ENCODE measurements at regions of chr1 and their contacts with region 1.

Region 1: GRCh38 chr1:205977402-205978014 is 25.7 kb downstream of the RAB7B start:
- DNase-seq: peak; percentile 81
- ATAC-seq: peak; percentile 85
- H3K4me3 Mint-ChIP-seq: no peak overlapping the region
- H3K27ac Mint-ChIP-seq: no peak overlapping the region
- H3K4me1 Mint-ChIP-seq: no peaks in the 10 kb centered on the region
- H3K27me3 Mint-ChIP-seq: peaks cover 5% of the 10 kb centered on the region

Region 2: GRCh38 chr1:205591522-205592351 is 385.8 kb before region 1 on chr1:
- CTCF ChIA-PET with region 1: interaction called, 19 read pairs
- POLR2A ChIA-PET with region 1: no interaction called
- DNase-seq: peak; percentile 91
- ATAC-seq: peak; percentile 90
- H3K4me3 Mint-ChIP-seq: peak overlapping the region; percentile 81
- H3K27ac Mint-ChIP-seq: peak overlapping the region; percentile 95
- H3K4me1 Mint-ChIP-seq: peaks cover 42% of the 10 kb centered on the region
- H3K27me3 Mint-ChIP-seq: peaks cover 3% of the 10 kb centered on the region

Region 3: DNA sequence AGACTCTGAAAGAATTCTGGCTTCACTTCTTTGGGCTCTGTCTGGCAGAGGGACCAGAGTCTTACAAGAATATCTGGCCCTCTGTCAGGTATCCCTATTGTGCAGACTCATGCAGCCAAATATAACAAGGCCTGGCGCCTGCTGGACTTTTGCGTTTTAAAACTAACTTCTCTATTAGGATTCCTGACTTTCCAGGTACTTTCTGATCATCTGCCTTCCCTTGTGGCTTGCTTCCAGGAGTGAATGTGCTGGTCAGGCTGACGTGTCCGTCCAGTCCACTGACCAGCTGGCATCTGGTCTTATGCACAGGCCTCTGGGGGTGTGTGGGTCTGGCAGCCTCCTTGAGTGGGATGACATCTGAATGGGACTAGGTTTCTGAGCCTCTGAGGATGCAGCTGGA is 193.6 kb before region 1 on chr1:
- CTCF ChIA-PET with region 1: interaction called, 33 read pairs
- POLR2A ChIA-PET with region 1: no interaction called
- DNase-seq: no peak
- ATAC-seq: no peak
- H3K4me3 Mint-ChIP-seq: no peak overlapping the region
- H3K27ac Mint-ChIP-seq: no peak overlapping the region
- H3K4me1 Mint-ChIP-seq: peaks cover 16% of the 10 kb centered on the region
- H3K27me3 Mint-ChIP-seq: no peaks in the 10 kb centered on the region

Region 4: GRCh38 chr1:205805082-205805712 is 172.3 kb before region 1 on chr1:
- CTCF ChIA-PET with region 1: interaction called, 19 read pairs
- POLR2A ChIA-PET with region 1: interaction called, 3 read pairs
- DNase-seq: peak; percentile 30
- ATAC-seq: peak; percentile 47
- H3K4me3 Mint-ChIP-seq: peak overlapping the region; percentile 23
- H3K27ac Mint-ChIP-seq: peak overlapping the region; percentile 70
- H3K4me1 Mint-ChIP-seq: peaks cover 38% of the 10 kb centered on the region
- H3K27me3 Mint-ChIP-seq: no peaks in the 10 kb centered on the region

Region 5: GRCh38 chr1:205925730-205926129 is 51.8 kb before region 1 on chr1:
- CTCF ChIA-PET with region 1: interaction called, 166 read pairs
- POLR2A ChIA-PET with region 1: no interaction called
- DNase-seq: no peak
- ATAC-seq: no peak
- H3K4me3 Mint-ChIP-seq: no peak overlapping the region
- H3K27ac Mint-ChIP-seq: no peak overlapping the region
- H3K4me1 Mint-ChIP-seq: no peaks in the 10 kb centered on the region
- H3K27me3 Mint-ChIP-seq: no peaks in the 10 kb centered on the region

Region 6: GRCh38 chr1:205961405-205961804 is 16.1 kb before region 1 on chr1:
- CTCF ChIA-PET with region 1: interaction called, 40 read pairs
- POLR2A ChIA-PET with region 1: no interaction called
- DNase-seq: no peak
- ATAC-seq: no peak
- H3K4me3 Mint-ChIP-seq: no peak overlapping the region
- H3K27ac Mint-ChIP-seq: no peak overlapping the region
- H3K4me1 Mint-ChIP-seq: peaks cover 6% of the 10 kb centered on the region
- H3K27me3 Mint-ChIP-seq: peaks cover 23% of the 10 kb centered on the region

Region 7: GRCh38 chr1:206106328-206107167 is 129.0 kb after region 1 on chr1:
- CTCF ChIA-PET with region 1: interaction called, 71 read pairs
- POLR2A ChIA-PET with region 1: no interaction called
- DNase-seq: peak; percentile 83
- ATAC-seq: peak; percentile 89
- H3K4me3 Mint-ChIP-seq: no peak overlapping the region
- H3K27ac Mint-ChIP-seq: no peak overlapping the region
- H3K4me1 Mint-ChIP-seq: no peaks in the 10 kb centered on the region
- H3K27me3 Mint-ChIP-seq: peaks cover 9% of the 10 kb centered on the region

Measured in activated CD8-positive, alpha-beta T cell treated with anti-CD3 and anti-CD28 coated beads, Interleukin-2, amount 10 ng/mL, durations not matched to agents 7 days and 5 days (primary cell).